ENCODE measurements at regions of chr3 and their contacts with region 1.

Region 1: DNA sequence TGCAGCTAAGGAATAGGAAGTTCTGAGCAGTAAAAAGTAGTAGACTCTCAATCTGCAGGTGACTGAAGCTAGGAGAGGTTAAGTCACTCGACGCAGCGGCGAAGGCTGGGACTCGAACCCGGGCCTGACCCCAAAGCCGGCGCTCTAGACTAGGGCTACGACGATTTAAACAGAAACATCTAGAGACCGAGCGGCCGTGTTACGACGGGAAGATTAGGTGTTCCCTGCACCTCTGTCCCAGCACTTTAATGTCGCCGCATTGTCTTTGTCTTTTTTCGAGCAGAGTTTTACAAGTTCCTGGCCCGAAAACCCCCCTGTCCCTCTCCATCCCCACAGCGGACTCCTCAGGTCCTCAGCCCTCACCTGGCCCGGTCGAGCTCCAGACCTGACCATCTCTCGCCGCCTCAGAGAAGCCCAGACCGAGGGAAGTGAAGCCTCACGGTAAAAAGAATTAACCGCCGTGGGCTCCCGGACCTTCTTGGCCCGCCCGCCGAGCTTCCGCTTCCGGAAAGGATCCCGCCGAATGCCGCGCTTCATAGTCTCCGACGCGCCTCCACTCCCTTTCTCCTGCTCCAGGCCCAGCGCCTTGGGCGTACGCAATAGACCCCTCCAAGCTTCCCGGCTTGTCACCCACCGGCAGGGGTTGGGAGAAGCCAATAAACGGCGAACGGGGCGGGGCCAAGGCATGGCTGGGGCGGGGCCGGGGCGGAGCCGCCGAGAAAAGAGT is at the start of gene CCDC14:
- DNase-seq: peak; percentile 73
- H3K4me3 Mint-ChIP-seq: peak within 1 kb of the TSS; percentile 93
- H3K27ac Mint-ChIP-seq: peak within 1 kb of the TSS; percentile 87
- H3K4me1 Mint-ChIP-seq: peaks cover 28% of the 10 kb centered on the region
- H3K27me3 Mint-ChIP-seq: peaks cover 11% of the 10 kb centered on the region
- total RNA-seq, gene CCDC14: 48.0 and 51.7 TPM in 2 replicates

Region 2: GRCh38 chr3:123584988-123585937 is 375.7 kb before region 1 on chr3 and contains the start of gene HACD2:
- intact Hi-C with region 1: loop called (anchors 1 kb)
- DNase-seq: peak; percentile 92
- H3K4me3 Mint-ChIP-seq: no peak within 1 kb of the TSS
- H3K27ac Mint-ChIP-seq: peak within 1 kb of the TSS; percentile 72
- H3K4me1 Mint-ChIP-seq: peaks cover 20% of the 10 kb centered on the region
- H3K27me3 Mint-ChIP-seq: no peaks in the 10 kb centered on the region
- total RNA-seq, gene HACD2: 29.5 and 32.5 TPM in 2 replicates

Region 3: GRCh38 chr3:123884203-123884831 is 76.6 kb before region 1 on chr3 and contains the start of gene MYLK:
- intact Hi-C with region 1: loop called (anchors 5 kb)
- DNase-seq: peak; percentile 56
- H3K4me3 Mint-ChIP-seq: peak within 1 kb of the TSS; percentile 74
- H3K27ac Mint-ChIP-seq: no peak within 1 kb of the TSS
- H3K4me1 Mint-ChIP-seq: peaks cover 10% of the 10 kb centered on the region
- H3K27me3 Mint-ChIP-seq: peaks cover 58% of the 10 kb centered on the region
- total RNA-seq, gene MYLK: 0.16 TPM in 1 of 2 replicates, not detected in the other

Region 4: GRCh38 chr3:124053871-124054270 is 92.9 kb after region 1 on chr3:
- intact Hi-C with region 1: no loop called
- DNase-seq: no peak
- H3K4me3 Mint-ChIP-seq: no peak overlapping the region
- H3K27ac Mint-ChIP-seq: no peak overlapping the region
- H3K4me1 Mint-ChIP-seq: no peaks in the 10 kb centered on the region
- H3K27me3 Mint-ChIP-seq: peaks cover 9% of the 10 kb centered on the region

Measured in activated T-helper 2 cell treated with anti-CD3 and anti-CD28 coated beads, Interferon-gamma antibody, Interleukin-2, Interleukin-4, amounts not matched to agents 10 μg/mL and 5 μg/mL and 100 μg/mL, durations not matched to agents 14 hours and 24 hours and 36 hours (primary cell).